HCT116 (cell line): ENCODE measurements at regions of chr9 and their contacts with region 1.

Region 1: DNA sequence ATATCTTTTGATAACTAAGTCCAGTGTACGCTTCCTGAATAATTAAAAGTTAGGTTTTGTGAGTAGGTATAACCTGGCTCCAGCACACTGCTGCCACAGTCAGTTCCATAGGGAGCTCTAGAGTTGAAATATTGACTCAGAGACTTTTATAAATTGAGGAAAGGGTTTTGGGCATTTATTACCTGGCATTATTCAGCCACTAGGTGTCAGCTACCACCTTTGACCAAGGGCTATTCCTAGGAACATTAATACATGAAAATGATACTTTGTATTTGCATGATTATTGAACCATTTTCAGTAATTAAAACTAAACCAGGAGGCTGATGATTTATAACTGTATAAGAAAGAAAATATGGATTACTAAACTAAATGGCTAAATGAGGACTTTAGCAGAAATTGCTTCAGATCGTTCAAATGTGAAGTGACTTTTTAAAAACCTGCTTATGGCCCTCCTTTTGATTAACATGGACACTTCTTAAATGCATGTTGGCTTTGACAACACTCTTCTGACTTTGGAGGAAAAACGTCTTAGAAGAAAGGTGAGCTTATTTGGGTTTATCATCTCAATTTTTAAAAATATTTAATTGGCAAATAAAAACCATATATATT is 83.0 kb downstream of the SMC2 start:
- DNase-seq: peak; percentile 15
- ATAC-seq: peak; percentile 73
- H3K4me3 ChIP-seq: no peak overlapping the region
- H3K27ac ChIP-seq: no peak overlapping the region
- H3K4me1 ChIP-seq: no peaks in the 10 kb centered on the region
- H3K27me3 ChIP-seq: no peaks in the 10 kb centered on the region; the same call in 1 of the 2 replicates
- CTCF ChIP-seq: peak; percentile 35 to 66 (median 47); a peak in 5 of 6 replicates
- POLR2A ChIP-seq: no peak
- RAD21 ChIP-seq: peak; percentile 57

Region 2: GRCh38 chr9:104386425-104387069 is 209.4 kb after region 1 on chr9:
- CTCF ChIA-PET with region 1: interaction called, 9 read pairs
- POLR2A ChIA-PET with region 1: interaction called, 3 read pairs
- RAD21 ChIA-PET with region 1: no interaction called
- intact Hi-C with region 1: loop called (anchors 2 kb)
- DNase-seq: peak; percentile 22
- ATAC-seq: peak; percentile 70
- H3K4me3 ChIP-seq: no peak overlapping the region
- H3K27ac ChIP-seq: no peak overlapping the region
- H3K4me1 ChIP-seq: no peaks in the 10 kb centered on the region
- H3K27me3 ChIP-seq: peaks cover 5% of the 10 kb centered on the region; the same call in 1 of the 2 replicates
- CTCF ChIP-seq: peak; percentile 31 to 68 (median 61); a peak in 4 of 6 replicates
- POLR2A ChIP-seq: no peak
- RAD21 ChIP-seq: peak; percentile 69

Region 3: GRCh38 chr9:104682642-104683041 is 505.5 kb after region 1 on chr9:
- CTCF ChIA-PET with region 1: no interaction called
- POLR2A ChIA-PET with region 1: no interaction called
- RAD21 ChIA-PET with region 1: no interaction called
- intact Hi-C with region 1: loop called (anchors 5 kb)
- DNase-seq: peak; percentile 53
- ATAC-seq: peak; percentile 87
- H3K4me3 ChIP-seq: no peak overlapping the region
- H3K27ac ChIP-seq: no peak overlapping the region
- H3K4me1 ChIP-seq: no peaks in the 10 kb centered on the region
- H3K27me3 ChIP-seq: no peaks in the 10 kb centered on the region
- CTCF ChIP-seq: peak; percentile 36 to 67 (median 47); a peak in 4 of 6 replicates
- POLR2A ChIP-seq: no peak
- RAD21 ChIP-seq: peak; percentile 73

Region 4: GRCh38 chr9:104808035-104808614 is 631.0 kb after region 1 on chr9:
- CTCF ChIA-PET with region 1: no interaction called
- POLR2A ChIA-PET with region 1: no interaction called
- RAD21 ChIA-PET with region 1: no interaction called
- intact Hi-C with region 1: no loop called
- DNase-seq: no peak
- ATAC-seq: peak; percentile 60
- H3K4me3 ChIP-seq: no peak overlapping the region
- H3K27ac ChIP-seq: no peak overlapping the region
- H3K4me1 ChIP-seq: no peaks in the 10 kb centered on the region
- H3K27me3 ChIP-seq: no peaks in the 10 kb centered on the region
- CTCF ChIP-seq: no peak
- POLR2A ChIP-seq: no peak
- RAD21 ChIP-seq: peak; percentile 42